Dorsolateral prefrontal cortex (tissue), 120 donors: ENCODE measurements at regions of chr11 and their contacts with region 1.

Region 1: DNA sequence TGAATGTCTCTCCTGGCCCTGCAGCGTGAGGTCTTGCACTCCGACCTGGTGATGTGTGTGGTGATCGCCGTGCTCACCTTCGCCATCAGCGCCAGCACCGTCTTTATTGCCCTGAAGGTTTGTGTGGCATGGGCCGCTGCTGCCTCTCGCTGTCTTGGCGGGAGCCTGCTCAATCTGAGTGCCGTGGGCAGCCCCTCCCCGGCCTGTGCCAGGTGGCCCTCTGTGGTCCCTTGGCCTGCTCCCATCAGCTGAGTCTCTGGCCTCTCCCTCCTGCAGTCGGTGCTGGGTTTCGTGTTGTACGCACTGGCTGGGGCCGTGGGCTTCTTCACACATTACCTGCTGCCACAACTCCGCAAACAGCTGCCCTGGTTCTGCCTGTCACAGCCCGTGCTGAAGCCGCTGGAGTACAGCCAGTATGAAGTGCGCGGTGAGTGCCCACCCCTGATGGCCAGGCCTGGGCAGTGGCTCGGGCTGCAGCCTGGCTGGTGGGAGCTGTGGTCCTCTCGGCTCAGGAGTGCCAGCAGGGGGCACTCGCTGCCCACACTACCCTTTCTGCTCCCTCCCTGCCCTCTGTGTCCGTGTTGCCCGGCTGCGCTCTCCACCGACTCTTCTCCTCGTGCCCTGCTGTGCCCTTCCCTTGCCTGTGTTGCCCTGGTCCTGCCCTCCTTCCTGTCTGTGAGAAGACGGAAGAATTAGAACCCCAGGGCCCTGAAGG is 10.2 kb downstream of the PCNX3 start:
- DNase-seq: peak; percentile 63 to 82 (median 72)
- H3K4me3 ChIP-seq: peak overlapping the region in 5 of 59 donors; percentile 4 to 35 (median 10)
- H3K27ac ChIP-seq: peak overlapping the region in 35 of 59 donors; percentile 5 to 84 (median 45)
- H3K27me3 ChIP-seq: no peaks in the 10 kb centered on the region
- CTCF ChIP-seq: peak; percentile 19 to 90 (median 78)

Region 2: DNA sequence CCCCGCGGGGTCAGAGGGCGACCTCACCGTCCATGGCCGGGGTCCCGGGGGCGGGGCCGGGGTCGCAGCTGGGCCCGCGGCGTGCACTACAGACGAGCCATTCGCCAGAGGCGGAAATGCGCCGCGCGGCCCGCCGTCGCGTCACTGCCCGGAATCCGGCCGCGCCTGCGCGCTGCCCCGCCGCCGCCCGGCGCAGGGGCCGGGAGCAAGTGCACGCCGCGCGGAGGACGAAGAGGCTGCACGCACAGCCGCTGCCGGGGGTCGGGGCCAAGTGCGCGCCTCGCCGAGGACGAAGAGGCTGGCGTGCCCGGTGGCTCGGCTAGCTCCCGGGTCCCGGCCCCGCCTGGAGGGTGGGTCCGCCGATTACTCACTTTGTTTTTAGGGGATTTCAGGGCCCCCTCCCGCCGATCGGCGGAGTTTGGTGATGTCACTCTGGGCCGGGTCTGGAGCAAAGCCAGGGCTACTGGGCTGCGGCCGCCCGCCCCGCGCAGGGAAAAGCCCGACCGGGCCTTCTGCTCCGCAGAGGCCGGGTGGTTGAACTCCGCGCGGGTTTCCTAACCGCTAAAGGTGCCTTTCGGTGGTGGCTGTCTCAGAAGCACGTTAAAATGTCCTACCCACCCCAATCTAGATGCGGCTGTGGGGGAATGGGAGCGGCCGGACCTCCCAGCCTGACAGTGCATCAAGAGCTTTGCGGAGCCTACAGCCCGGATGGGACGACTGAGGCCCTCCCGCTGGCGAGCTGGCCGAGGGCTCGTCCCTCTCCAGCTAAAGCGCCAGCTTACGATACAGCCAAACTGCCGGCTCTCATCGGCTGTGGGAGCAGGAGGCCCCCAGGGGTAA is 37.2 kb after region 1 on chr11 and contains the start of gene RELA:
- intact Hi-C with region 1: loop called in 1 of 2 experiments (anchors 5 kb)
- DNase-seq: peak; percentile 90 to 97 (median 94)
- H3K4me3 ChIP-seq: peak within 1 kb of the TSS; percentile 62 to 100 (median 92)
- H3K27ac ChIP-seq: peak within 1 kb of the TSS; percentile 91 to 100 (median 99)
- H3K27me3 ChIP-seq: no peaks in the 10 kb centered on the region
- CTCF ChIP-seq: peak in 30 of 56 donors; percentile 6 to 51 (median 24)
- total RNA-seq, gene RELA: 28.1 to 93.7 (median 48.2) TPM

Region 3: DNA sequence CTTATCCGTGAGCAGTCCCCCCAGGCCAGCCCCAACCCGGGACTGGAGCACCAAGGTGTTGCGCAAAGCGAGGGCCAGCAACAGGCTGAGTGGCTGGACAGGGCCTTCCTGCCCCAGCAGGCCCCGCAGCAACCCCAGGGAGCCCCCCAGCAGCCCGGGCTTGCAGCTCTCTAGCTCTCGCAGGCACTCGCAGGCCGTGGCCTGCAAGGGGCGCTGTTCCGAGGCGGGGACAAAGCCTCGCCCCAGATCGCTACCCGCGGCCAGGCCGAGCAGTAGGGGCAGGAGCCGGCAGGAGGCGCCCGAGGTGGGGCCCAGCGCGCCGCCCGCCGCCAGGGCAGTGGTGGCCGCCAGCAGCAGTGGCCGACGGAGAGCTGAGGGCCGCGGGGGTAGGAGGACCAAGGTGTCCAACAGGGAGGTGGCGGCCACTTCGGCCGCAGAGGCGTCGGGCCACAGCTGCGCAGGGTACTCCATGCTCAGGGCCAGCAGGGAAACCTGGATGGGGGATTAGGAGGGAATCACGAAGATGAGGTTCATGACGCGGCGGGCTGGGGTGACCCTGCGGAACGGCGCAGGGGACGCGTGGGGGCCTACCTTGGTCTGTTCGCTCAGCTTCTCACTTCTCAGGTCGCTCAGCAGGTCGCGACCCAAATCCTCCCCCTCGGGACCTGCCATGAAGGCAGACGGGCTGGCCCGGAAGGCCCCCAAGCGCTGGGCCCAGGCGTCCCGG is 154.2 kb after region 1 on chr11:
- intact Hi-C with region 1: loop called in 1 of 2 experiments (anchors 5 kb)
- DNase-seq: peak in 9 of 10 donors; percentile 43 to 85 (median 63)
- H3K4me3 ChIP-seq: peak overlapping the region; percentile 58 to 99 (median 88)
- H3K27ac ChIP-seq: peak overlapping the region in 54 of 59 donors; percentile 33 to 91 (median 74)
- H3K27me3 ChIP-seq: peaks cover 0 to 5% (median 0%) of the 10 kb centered on the region in 45 donors
- CTCF ChIP-seq: peak; percentile 58 to 96 (median 85)

Region 4: DNA sequence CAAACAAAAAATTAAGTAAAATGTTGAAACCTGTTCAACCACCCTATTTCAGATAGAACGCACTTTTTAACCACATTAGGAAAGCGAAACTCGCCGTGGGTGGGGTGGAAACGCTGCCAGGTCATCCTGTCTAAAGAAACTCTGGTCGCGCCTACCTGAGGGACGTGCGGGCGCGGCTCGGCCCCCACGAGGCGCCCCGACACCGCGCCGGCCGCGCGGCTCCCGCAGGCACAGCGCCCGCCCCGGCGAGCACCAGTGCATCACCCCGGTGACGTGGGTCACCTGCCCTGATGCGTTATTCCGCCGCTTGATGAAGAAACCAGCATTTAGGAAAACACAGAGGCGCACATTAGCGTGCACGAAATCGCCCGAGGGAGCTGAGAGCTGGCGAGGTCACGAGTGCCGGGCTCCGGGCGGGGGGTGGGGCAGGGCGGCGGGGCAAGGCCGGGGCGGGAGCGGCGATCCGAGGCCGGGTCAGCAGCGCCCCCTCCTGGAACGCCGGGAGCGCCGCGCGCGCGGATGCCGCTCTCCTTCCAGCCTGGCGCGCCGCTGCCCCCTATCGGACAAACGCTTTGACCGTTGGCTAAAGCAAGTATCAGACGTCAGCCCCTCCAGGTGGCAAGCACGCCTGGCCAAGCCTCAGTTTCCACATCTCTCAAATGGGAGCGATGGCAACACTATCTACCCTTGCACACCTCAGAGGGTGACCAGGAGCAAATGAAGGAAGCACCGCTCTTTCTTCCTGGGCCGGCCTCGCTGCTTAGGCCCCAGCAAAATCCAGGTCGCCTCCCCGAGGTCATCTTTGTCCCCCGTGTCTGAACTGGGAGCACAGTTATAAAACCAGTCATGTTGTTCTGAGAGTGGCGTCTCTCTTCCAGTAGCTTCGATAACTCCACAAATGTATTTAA is 192.3 kb after region 1 on chr11:
- intact Hi-C with region 1: loop called (anchors 2 to 5 kb)
- DNase-seq: peak; percentile 88 to 95 (median 92)
- H3K4me3 ChIP-seq: peak overlapping the region; percentile 48 to 97 (median 73)
- H3K27ac ChIP-seq: peak overlapping the region in 51 of 59 donors; percentile 19 to 91 (median 75)
- H3K27me3 ChIP-seq: no peaks in the 10 kb centered on the region
- CTCF ChIP-seq: peak; percentile 95 to 100 (median 100)

Region 5: DNA sequence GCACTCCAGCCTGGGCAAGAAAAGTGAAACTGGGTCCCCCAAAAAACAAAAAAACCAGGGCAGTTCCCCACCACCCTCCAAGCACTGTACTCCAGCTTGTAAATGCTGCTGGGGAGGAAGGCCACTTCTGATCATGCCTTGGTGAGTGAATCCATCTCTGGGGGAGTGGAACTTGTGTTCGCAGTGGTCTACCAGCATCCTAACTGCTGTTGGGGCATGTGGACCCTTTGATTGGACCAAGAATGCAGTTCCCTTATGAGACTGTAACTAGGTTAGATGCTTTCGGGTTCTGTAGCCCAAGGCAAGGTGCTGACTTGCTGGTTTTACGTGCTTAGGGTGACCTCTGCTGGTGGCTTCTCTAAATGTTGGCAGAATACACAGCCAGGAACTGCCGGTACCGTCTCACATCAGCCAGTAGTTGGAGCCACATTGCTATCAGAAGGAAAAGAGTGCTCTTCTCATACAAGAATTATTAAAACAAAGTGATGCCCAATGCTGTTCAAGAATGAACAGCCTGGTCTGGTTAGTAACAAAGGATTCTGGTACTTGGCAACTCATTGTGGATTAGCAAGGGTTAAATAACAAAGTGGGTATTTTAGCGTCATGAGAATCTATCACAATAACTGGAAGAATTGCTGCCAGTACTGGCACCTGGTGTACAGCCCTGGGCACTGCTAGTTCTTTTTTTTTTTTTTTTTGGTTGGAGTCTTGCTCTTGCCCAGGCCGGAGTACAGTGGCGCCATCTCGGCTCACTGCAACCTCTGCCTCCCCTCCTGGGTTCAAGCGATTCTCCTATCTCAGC is 363.2 kb after region 1 on chr11:
- intact Hi-C with region 1: loop called in 1 of 2 experiments (anchors 5 kb)
- DNase-seq: peak; percentile 53 to 97 (median 88)
- H3K4me3 ChIP-seq: peak overlapping the region in 4 of 59 donors; percentile 6 to 26 (median 16)
- H3K27ac ChIP-seq: peak overlapping the region in 19 of 59 donors; percentile 0 to 67 (median 37)
- H3K27me3 ChIP-seq: no peaks in the 10 kb centered on the region
- CTCF ChIP-seq: peak; percentile 74 to 99 (median 95)